Spleen (tissue), 13 donors: ENCODE measurements at regions of chr14 and their contacts with region 1.

Region 1: DNA sequence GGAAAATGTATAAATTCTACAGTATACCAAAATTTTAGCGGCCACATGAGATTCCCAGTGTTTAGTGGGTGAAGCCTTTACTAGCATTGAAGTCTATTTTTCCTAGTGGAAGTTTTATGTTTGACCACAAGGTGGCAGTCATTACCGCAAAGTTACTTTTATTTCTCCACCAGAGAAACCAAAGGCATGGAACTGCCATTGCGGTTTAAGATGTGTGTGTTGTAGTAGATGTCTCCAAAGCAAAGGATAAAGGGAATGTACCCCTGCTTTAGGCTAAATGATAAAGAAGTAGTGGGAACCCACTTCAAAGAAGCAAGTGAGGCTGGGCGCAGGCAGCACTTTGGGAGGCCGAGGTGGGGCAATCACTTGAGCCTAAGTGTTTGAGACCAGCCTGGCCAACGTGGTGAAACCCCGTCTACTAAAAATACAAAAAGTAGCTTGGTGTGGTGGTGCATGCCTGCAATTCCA is 140.5 kb downstream of the PRKCH start:
- DNase-seq: no peak
- H3K4me3 ChIP-seq: no peak overlapping the region
- H3K27ac ChIP-seq: peak overlapping the region in 4 of 8 donors; percentile 24 to 41 (median 40)
- H3K4me1 ChIP-seq: peaks cover 11 to 55% (median 29%) of the 10 kb centered on the region in 6 donors
- H3K27me3 ChIP-seq: no peaks in the 10 kb centered on the region
- CTCF ChIP-seq: peak; percentile 71 to 91 (median 85)
- POLR2A ChIP-seq: no peak

Region 2: GRCh38 chr14:61569783-61570182 is 107.9 kb after region 1 on chr14:
- intact Hi-C with region 1: no loop called
- DNase-seq: peak; percentile 86
- H3K4me3 ChIP-seq: peak overlapping the region in 1 of 8 donors; percentile 62
- H3K27ac ChIP-seq: peak overlapping the region in 7 of 8 donors; percentile 79 to 95 (median 84)
- H3K4me1 ChIP-seq: peaks cover 17 to 80% (median 45%) of the 10 kb centered on the region in 6 donors
- H3K27me3 ChIP-seq: no peaks in the 10 kb centered on the region
- CTCF ChIP-seq: peak in 1 of 11 experiments; percentile 14
- POLR2A ChIP-seq: no peak

Region 3: DNA sequence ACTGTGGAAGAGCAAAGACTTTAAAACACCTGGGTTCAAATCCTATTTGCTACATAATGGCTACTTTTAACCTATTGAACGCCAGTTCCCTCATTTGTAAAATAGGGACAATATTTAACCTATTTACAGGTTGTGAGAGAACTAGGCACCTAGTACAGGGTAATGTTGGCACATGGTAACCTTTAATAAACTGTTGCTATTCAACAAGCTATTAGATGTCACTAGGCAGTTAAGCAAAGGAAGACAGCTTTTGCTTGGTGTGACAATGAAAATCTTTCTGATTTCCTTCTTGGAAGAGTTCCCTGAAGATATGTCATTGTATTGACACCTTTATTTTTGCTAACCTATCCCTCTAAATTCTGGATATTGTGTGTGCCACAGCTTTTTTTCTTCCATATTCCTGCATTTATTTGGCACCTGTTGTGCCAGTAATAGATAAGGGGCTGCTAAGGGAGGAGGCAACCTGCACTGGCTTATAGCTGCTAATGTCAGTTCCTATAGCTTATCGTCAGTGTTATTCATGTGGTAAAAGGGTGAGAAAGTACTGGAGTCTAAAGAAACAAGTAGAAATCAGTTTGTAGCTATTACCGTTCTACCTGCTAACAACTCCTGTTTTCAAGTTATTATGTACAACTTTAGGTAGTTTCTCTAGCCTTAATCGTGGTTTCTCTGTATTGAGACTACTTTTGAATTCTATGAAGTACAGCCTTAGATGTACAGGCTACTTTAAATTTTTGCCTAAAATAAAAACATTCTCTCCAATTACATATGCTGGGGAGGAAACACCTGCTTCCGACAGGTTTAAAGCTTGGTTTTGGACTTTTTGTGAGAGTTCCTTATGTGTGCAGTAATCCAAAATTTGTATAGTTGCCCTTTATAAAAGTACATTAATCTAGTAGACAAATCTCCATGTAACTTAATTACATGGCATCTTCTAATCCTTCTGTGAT is 257.8 kb after region 1 on chr14:
- intact Hi-C with region 1: loop called (anchors 10 kb)
- DNase-seq: no peak
- H3K4me3 ChIP-seq: peak overlapping the region in 2 of 8 donors; percentile 3 to 7
- H3K27ac ChIP-seq: peak overlapping the region; percentile 38 to 81 (median 68)
- H3K4me1 ChIP-seq: peaks cover 46 to 99% (median 70%) of the 10 kb centered on the region in 6 donors
- H3K27me3 ChIP-seq: no peaks in the 10 kb centered on the region
- CTCF ChIP-seq: no peak
- POLR2A ChIP-seq: no peak

Region 4: DNA sequence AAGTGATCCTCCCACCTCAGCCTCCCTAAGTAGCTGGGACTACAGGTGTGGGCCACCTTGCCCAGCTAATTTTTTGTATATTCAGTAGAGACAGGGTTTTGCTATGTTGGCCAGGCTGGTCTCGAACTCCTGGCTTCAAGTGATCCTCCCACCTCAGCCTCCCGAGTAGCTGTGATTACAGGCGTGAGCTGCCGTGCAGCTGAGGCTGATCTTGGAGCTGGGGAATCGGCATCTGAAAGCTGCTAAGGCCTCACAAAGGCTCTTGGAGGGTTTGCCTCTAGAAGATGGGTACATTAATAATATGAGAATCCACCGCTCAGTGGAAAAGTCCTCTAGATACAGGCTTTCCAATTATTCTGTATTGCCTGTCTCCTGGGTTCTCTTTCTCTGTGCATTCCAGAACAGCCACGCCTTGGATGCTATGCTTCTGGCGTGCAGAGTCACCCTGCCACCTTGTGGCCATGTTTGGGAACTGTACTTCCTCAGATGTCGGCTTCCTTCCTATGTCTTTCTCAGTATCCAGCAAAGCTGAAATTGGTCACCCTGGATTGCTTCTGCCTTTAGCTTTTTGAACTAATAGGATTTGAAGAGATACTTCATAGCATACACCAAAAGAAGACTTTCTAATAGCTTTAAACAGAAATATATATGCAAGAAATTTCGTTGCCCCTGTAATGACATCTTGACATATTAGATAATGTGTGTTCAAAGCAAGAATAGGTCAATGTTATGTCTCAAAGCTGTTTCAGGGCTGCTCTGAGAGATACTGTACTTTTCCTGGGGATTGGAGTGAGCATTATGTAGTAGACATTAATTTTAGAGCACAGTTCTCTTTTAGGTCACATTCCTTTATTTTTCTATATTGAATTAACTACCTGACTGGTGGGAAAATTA is 375.7 kb after region 1 on chr14:
- intact Hi-C with region 1: loop called (anchors 2 kb)
- DNase-seq: peak; percentile 90
- H3K4me3 ChIP-seq: no peak overlapping the region
- H3K27ac ChIP-seq: no peak overlapping the region
- H3K4me1 ChIP-seq: peaks cover 0 to 9% (median 2%) of the 10 kb centered on the region in 6 donors
- H3K27me3 ChIP-seq: no peaks in the 10 kb centered on the region
- CTCF ChIP-seq: peak; percentile 81 to 97 (median 92)
- POLR2A ChIP-seq: no peak

Region 5: DNA sequence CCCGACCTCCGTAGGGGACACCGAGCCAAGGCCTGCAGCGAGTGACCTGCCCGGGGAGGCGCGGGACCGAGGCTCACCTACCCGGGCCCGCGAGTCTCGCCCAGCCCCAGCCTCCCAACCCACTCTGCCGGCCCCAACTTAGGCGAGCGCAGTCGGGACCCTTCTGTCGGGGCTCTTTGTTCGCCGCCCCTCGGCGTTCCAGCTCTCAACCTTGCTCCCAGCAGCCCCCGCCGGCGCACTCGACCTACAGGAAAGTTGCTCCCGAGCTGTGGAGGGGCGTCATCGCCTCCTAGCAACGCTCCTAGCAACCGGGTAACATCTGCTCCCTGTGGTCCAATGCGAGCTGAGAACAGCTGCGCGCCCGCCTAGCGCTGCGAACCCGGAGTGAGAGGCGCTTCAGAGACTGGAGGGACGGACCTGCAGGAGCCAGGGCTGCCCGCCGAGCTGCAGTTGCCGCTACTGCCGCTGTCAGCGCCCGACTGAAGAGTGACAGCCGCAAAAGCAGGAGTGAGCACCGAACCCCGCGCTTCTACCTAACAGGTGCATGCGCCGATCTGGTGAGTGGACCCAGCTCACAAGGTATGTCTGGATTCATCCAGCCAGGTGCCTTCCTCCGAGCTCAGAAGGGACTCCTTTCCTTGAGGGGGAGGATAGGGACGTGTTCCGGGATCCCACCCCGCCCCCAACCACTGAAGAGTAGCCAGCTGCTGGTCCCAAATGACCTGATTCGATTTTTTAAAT is 655.3 kb after region 1 on chr14:
- intact Hi-C with region 1: loop called (anchors 10 kb)
- DNase-seq: peak; percentile 94
- H3K4me3 ChIP-seq: peak overlapping the region; percentile 8 to 66 (median 36)
- H3K27ac ChIP-seq: no peak overlapping the region
- H3K4me1 ChIP-seq: peaks cover 4 to 39% (median 15%) of the 10 kb centered on the region in 6 donors
- H3K27me3 ChIP-seq: peaks cover 0 to 57% (median 37%) of the 10 kb centered on the region in 7 donors
- CTCF ChIP-seq: peak; percentile 38 to 76 (median 65)
- POLR2A ChIP-seq: no peak